ENCODE measurements at regions of chr6 and their contacts with region 1.

Region 1: DNA sequence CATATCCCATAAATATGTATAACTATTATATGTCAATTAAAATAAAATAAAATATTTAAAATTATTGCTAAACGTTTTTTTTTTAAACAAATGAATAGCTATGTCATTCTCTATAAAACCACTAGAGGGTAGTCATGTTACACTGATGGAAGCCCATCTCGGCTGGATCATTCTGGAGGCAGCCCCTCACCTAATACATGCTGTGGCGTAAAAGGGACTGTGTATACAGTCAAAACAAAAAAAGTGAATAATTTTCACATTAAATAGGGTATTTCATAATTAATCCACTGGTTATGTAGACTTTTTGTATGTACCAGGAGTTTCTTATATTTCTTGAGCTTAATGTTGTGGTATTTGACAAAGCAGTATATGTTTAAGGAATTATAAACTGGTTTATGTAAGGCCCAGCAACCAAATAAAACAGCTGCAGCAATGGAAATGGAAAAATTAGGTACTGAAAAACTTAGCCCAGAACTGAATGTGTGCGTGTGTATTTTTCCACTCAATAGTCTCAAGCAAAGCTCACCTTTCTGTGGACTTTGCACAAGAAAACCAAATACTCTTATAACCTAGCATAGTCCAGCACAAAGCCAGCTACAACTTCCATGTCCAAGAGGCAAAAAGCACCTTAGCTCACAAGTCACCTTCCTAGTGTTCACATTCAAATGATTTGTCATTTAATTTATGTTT is 81.7 kb downstream of the COL9A1 start:
- DNase-seq: no peak
- H3K4me3 ChIP-seq: no peak overlapping the region
- H3K27ac ChIP-seq: no peak overlapping the region
- H3K4me1 ChIP-seq: no peaks in the 10 kb centered on the region
- H3K27me3 ChIP-seq: peaks cover 4% of the 10 kb centered on the region; the same call in 1 of the 2 replicates
- CTCF ChIP-seq: peak; percentile 86

Region 2: DNA sequence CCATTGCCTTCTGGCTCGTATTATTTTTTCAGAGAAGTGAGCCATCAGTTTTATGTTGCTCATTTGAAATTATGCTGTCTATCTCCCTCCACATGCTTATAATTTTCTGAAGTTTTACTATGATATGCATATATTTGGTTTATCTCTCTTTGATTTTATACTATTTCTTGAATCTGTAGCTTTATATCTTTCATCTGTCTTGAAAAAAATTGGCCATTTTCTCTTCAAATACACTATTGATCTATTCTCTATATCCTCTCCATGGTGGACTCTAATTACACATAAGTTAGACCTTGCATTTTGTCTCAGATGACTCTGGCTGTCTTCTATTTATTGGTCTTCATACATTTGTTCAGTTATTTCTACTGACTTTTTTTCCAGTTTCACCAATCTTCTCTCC is 368.5 kb before region 1 on chr6:
- CTCF ChIA-PET with region 1: no interaction called
- POLR2A ChIA-PET with region 1: no interaction called
- intact Hi-C with region 1: no loop called
- DNase-seq: no peak
- H3K4me3 ChIP-seq: no peak overlapping the region
- H3K27ac ChIP-seq: no peak overlapping the region
- H3K4me1 ChIP-seq: no peaks in the 10 kb centered on the region
- H3K27me3 ChIP-seq: no peaks in the 10 kb centered on the region
- CTCF ChIP-seq: no peak

Region 3: DNA sequence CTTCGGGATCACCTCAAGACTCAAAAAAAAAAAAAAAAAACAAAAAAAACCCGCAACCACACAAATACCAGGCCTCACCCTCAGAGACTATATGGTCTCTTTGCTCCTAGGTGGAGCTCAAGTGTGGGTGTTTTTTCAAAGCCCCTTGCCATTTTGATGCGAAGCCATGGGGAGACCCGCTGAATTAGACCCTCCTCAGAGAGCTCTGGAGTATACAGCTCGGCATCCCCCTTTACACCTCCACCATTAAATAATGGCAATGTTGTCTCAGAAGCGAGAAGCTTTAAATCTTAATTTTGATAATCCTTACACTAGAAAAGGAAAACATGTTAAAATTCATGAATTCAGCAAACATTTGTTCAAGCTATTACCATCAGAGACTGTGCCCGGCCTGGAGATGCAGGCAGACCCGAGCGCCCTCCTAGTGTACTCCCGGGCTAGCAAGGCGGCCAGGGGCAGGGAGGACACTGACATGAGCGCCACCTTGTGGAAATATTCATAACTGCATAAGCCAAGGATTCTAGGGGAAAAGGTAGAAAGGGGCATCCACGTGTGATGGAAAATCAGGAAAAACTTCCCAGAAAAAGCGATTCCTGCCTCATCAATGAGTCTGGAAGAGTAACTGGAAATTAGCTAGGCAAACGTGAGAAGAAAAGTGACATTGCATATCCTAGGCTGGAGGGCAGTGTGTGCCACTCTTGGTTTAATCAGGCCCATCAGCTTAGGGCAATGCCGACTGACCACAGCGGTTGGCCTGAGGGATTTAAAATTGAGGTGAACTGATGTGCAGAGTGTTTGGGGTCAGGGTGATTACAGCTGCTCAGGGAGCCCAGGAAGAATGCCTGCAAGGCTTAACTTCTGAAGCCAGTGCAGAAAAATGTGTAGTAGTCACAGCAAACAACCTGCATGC is 663.2 kb after region 1 on chr6:
- CTCF ChIA-PET with region 1: interaction called, 7 read pairs
- POLR2A ChIA-PET with region 1: no interaction called
- intact Hi-C with region 1: loop called (anchors 5 kb)
- DNase-seq: peak in 1 of 2 experiments; percentile 52
- H3K4me3 ChIP-seq: no peak overlapping the region
- H3K27ac ChIP-seq: no peak overlapping the region
- H3K4me1 ChIP-seq: no peaks in the 10 kb centered on the region
- H3K27me3 ChIP-seq: no peaks in the 10 kb centered on the region; the same call in 1 of the 2 replicates
- CTCF ChIP-seq: peak; percentile 96

Region 4: DNA sequence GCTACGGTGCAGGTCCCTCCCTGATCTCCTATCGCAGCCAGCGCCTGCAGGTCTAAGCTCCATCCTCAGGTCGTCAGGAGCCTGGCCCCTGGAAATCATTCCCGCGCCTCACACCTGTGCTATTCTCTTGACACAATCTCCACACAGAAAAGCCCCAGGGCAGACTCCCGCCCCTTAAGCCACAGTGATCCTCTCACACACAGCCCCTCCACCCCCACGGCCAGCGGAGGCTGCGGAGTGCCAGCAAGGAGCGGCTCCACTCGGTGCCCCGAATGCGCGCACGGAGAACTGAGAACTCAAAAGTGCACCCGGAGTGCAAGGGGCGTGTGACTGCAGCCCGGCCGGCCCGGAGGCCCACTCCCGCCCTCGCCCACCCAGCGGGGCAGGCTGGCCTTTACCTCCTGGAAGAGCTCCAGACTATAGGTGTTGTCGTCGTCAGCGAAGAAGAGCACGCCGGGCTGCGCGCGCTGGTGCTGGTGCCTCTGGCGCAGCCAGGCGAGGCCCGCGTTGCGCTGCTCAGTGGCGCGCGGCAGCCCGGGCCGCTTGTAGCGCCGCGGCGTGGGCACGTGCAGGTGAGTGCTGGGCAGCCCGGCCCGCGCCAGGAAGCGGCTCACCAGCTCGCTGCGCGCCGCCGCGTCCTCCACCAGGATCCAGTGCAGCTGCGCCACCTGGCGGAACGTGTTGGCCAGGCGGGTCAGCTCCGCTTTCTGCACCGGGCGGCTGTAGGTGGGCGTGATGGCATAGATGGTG is 734.4 kb after region 1 on chr6:
- CTCF ChIA-PET with region 1: interaction called, 8 read pairs
- POLR2A ChIA-PET with region 1: no interaction called
- intact Hi-C with region 1: loop called (anchors 10 kb)
- DNase-seq: peak in 1 of 2 experiments; percentile 79
- H3K4me3 ChIP-seq: peak overlapping the region; percentile 8; the same call in 1 of the 2 replicates
- H3K27ac ChIP-seq: no peak overlapping the region
- H3K4me1 ChIP-seq: no peaks in the 10 kb centered on the region
- H3K27me3 ChIP-seq: peaks cover 14% of the 10 kb centered on the region
- CTCF ChIP-seq: peak; percentile 71

Region 5: GRCh38 chr6:71248306-71248765 is 1027.2 kb after region 1 on chr6:
- CTCF ChIA-PET with region 1: no interaction called
- POLR2A ChIA-PET with region 1: no interaction called
- intact Hi-C with region 1: no loop called
- DNase-seq: peak in 1 of 2 experiments; percentile 51
- H3K4me3 ChIP-seq: no peak overlapping the region
- H3K27ac ChIP-seq: no peak overlapping the region
- H3K4me1 ChIP-seq: peaks cover 29% of the 10 kb centered on the region
- H3K27me3 ChIP-seq: no peaks in the 10 kb centered on the region
- CTCF ChIP-seq: no peak